ENCODE measurements at regions of chr4 and their contacts with region 1.

Region 1: DNA sequence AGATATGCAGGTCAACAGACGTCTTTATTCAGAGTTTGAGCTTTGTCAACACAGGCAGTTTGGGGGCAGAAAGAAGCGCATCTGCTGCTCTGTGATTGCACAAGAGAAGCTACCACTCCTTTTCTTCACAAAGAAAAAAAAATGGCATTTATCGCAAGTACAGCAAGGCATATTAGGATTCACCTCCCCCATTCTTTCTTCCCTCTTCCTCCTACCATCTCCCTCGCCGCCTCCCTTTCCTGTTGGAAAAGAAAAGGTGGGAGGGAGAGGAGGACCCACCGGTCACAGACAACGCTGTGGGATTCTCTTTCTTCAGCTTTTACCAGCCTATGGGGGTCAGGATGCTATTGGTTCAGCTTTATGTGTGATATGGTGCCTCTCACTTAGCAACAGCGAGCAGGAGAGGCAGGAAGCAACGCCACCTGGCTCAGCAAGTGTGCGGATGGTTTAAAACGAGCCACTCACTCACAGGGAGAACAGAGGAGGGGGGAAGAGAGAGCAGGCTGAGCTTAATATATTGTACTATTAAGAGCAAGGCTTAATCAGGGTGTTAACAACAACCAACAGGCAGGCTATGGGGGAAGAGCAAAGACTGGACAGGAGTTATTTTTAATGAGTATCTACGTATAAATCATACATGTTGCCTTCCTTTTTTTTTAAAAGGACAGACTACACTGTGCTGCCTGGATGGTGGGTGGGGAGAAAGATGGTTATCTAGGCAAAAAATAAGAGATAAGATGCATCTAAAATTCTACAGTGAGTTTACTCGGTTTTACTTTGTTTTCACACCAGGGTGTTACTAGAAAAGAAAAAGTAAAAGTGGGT is 104.7 kb downstream of the MAML3 start:
- DNase-seq: peak; percentile 79

Region 2: DNA sequence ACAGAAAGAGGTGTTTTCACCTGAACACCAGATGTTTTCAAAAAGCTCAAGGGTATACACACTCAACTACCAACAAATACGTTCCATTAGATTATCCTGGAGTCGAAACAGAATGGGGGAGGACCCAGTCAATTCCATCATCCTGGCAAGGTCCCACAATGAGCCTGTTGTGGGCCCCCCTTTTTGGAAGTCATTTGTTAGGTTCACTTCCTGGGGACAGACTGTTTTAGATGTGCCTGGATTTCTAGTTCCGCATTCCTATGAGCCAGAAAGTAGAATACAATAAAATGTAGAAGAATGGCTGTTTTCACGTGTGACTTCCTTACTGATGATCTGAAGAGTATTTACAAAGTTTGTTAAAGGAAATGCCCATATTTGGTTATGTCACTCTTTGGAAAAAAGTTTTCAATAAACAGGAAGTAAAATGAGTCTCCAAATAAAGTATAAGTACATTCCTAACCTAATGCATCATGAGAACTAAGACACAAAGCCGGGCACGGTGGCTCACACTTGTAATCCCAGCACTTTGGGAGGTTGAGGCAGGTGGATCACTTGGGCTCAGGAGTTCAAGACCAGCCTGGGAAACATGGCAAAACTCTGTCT is 87.8 kb before region 1 on chr4:
- intact Hi-C with region 1: no loop called
- DNase-seq: no peak

Region 3: DNA sequence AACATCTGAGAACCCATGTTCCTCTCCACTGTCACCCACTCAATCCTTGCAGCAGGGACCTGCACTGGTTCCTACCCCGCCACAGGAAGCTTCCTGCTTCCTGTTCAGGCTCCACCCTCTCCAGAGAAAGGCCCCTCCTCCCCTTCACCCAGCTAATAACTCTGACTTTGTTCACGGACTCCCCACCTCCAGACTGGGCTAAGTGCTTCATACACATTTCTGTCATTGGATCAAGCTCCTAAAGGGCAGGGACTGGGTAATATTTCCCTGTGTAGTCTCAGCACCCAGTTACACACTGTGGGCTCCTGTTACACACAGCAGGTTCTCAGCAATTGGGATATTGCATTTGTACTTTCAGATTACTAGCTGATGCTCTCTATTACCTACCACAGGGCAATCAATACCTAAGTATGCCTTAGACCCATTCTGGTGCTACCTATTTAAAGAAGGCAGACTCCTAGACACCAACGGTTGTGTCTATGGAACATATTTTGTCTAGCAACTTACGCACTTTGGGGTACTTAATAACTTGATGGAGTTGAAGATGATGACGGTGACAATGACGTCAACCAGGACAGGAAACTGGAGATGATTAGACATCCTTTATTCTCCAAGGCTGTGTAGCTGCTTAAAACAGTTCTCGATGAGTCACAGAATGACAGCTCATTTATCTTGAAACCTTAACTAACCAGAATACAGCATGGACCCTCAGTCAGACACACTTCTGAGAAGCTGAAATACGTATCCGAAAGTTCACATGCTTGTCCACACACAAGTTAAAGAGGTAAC is 46.7 kb after region 1 on chr4:
- intact Hi-C with region 1: loop called (anchors 5 kb)
- DNase-seq: peak; percentile 79